ENCODE measurements at regions of chr14 and their contacts with region 1.

Region 1: DNA sequence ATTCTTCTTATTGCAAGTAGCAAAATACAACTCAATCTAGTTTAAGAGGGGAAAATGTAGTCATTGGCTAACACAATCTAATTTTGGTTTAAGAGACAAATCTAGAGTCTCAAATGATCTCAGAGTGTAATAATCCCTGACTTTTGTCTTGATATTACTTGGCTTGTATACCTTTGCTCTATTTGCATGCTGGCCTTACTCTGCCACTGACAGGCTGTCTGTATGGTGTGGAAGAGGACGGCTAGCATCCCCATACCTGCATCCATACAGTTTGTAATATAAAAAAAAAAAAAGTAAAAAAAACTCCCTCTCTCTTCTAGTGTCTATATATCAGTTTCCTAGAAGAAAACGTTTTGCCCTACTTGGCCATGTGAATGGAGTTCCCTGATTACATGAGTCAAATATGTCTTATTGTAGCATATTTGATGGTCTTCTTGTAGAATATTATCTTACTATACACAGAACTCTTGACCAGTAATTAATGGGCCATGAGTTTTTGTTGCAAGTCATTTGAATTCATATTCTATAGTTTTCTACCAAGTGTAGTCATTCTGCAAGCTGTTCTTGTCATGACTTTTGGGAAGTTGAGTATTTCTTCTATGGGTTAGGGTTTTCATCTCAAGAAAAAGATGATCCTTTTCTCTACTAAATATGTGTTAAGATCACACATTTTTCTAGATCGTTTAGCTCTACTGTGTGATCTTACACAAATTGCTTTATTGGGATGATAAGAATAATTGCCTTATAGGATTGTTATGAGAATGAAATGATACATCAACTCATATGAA is 8.2 kb downstream of the HIF1A start:
- DNase-seq: no peak
- H3K4me3 Mint-ChIP-seq: no peak overlapping the region
- H3K27ac Mint-ChIP-seq: no peak overlapping the region
- H3K4me1 Mint-ChIP-seq: peaks cover 78% of the 10 kb centered on the region
- H3K27me3 Mint-ChIP-seq: no peaks in the 10 kb centered on the region

Region 2: DNA sequence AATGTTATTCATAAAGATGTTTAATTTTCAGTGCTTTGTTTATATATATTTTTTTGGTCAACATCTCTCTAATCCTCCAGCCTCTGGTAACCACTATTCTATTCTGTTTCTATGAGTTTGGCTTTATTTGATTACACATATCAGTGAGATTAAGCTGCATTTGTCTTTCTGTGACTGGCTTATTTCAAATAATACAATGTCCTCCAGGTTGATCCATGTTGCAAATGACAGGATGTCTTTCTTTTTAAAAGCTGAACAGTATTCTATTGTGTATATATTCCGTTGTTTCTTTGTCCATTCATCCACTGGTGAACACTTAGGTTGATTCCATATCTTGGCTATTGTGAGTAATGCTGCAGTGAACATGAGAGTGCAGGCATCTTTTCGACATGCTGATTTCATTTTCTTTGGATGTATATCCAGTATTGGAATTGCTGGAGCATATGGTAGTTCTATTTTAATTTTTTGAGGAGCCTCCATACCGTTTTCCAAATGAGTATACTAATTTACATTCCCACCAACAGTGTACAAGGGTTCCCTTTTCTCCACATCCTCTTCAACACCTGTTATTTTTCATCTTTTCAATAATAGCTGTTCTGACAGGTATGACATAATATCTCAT is 239.8 kb before region 1 on chr14:
- CTCF ChIA-PET with region 1: no interaction called
- POLR2A ChIA-PET with region 1: no interaction called
- DNase-seq: no peak
- H3K4me3 Mint-ChIP-seq: no peak overlapping the region
- H3K27ac Mint-ChIP-seq: no peak overlapping the region
- H3K4me1 Mint-ChIP-seq: peaks cover 45% of the 10 kb centered on the region
- H3K27me3 Mint-ChIP-seq: no peaks in the 10 kb centered on the region

Region 3: GRCh38 chr14:61713724-61714414 is 10.3 kb after region 1 on chr14:
- CTCF ChIA-PET with region 1: interaction called, 3 read pairs
- POLR2A ChIA-PET with region 1: interaction called, 19 read pairs
- DNase-seq: no peak
- H3K4me3 Mint-ChIP-seq: no peak overlapping the region
- H3K27ac Mint-ChIP-seq: no peak overlapping the region
- H3K4me1 Mint-ChIP-seq: peaks cover 81% of the 10 kb centered on the region
- H3K27me3 Mint-ChIP-seq: no peaks in the 10 kb centered on the region